ENCODE measurements at regions of chr1 and their contacts with region 1.

Region 1: GRCh38 chr1:100459358-100460114 is 78.4 kb upstream of the GPR88 start:
- DNase-seq: peak; percentile 64 to 84 (median 78)
- H3K4me3 ChIP-seq: no peak overlapping the region
- H3K27ac ChIP-seq: no peak overlapping the region
- H3K4me1 ChIP-seq: no peaks in the 10 kb centered on the region
- H3K27me3 ChIP-seq: no peaks in the 10 kb centered on the region
- CTCF ChIP-seq: peak; percentile 54 to 78 (median 75)
- EP300 ChIP-seq: no peak
- POLR2A ChIP-seq: no peak

Region 2: GRCh38 chr1:99808391-99809115 is 651.0 kb before region 1 on chr1:
- intact Hi-C with region 1: loop called in 1 of 4 experiments (anchors 10 kb)
- DNase-seq: peak in 2 of 5 donors; percentile 8 to 28
- H3K4me3 ChIP-seq: no peak overlapping the region
- H3K27ac ChIP-seq: no peak overlapping the region
- H3K4me1 ChIP-seq: peaks cover 3% of the 10 kb centered on the region
- H3K27me3 ChIP-seq: no peaks in the 10 kb centered on the region
- CTCF ChIP-seq: peak; percentile 44 to 63 (median 59)
- EP300 ChIP-seq: no peak
- POLR2A ChIP-seq: no peak

Region 3: GRCh38 chr1:100351095-100351891 is 108.2 kb before region 1 on chr1:
- intact Hi-C with region 1: loop called in 1 of 4 experiments (anchors 10 kb)
- DNase-seq: peak; percentile 68 to 83 (median 77)
- H3K4me3 ChIP-seq: peak overlapping the region; percentile 90
- H3K27ac ChIP-seq: peak overlapping the region; percentile 3 to 69
- H3K4me1 ChIP-seq: peaks cover 3% of the 10 kb centered on the region
- H3K27me3 ChIP-seq: no peaks in the 10 kb centered on the region
- CTCF ChIP-seq: no peak
- EP300 ChIP-seq: no peak
- POLR2A ChIP-seq: peak; percentile 20

Region 4: GRCh38 chr1:100606438-100606837 is 146.9 kb after region 1 on chr1:
- intact Hi-C with region 1: loop called in 2 of 4 experiments (anchors 10 kb)
- DNase-seq: peak; percentile 24 to 60 (median 44)
- H3K4me3 ChIP-seq: no peak overlapping the region
- H3K27ac ChIP-seq: no peak overlapping the region
- H3K4me1 ChIP-seq: peaks cover 3% of the 10 kb centered on the region
- H3K27me3 ChIP-seq: no peaks in the 10 kb centered on the region
- CTCF ChIP-seq: peak; percentile 28 to 54 (median 37)
- EP300 ChIP-seq: no peak
- POLR2A ChIP-seq: no peak

Region 5: GRCh38 chr1:100866041-100866900 is 406.7 kb after region 1 on chr1:
- intact Hi-C with region 1: loop called (anchors 2 to 5 kb)
- DNase-seq: no peak
- H3K4me3 ChIP-seq: no peak overlapping the region
- H3K27ac ChIP-seq: no peak overlapping the region
- H3K4me1 ChIP-seq: no peaks in the 10 kb centered on the region
- H3K27me3 ChIP-seq: no peaks in the 10 kb centered on the region
- CTCF ChIP-seq: peak in 2 of 3 donors; percentile 62 to 63
- EP300 ChIP-seq: no peak
- POLR2A ChIP-seq: no peak